ENCODE measurements at regions of chr16 and their contacts with region 1.

Region 1: DNA sequence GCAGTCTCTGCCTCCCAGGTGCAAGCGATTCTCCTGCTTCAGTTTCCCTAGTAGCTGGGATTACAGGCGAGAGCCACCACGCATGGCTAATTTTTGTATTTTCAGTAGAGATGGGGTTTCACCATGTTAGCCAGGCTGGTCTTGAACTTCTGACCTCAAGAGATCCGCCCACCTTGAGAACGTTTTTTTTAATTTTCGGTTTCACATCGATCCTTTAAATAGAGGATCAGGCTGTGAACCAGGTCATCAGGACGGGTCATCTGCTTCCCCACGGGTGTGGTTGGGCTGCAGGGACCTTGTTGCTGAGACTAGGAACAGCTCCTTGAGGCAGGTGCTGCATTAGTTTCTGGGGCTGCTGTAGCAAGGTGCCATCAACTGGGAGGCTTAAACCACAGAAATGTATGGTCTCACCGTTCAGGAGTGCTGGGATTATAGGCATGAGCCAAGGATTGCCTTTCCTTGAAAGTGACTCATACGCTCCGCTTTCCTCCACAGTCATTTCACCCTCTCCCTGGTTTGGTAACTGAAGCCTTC is 7.9 kb upstream of the NAGPA start:
- DNase-seq: no peak
- ATAC-seq: no peak; the same call in 2 of the 3 replicates
- H3K4me3 ChIP-seq: peak overlapping the region in 1 of 3 experiments; percentile 8; a peak in 1 of 6 replicates
- H3K27ac ChIP-seq: no peak overlapping the region
- H3K4me1 ChIP-seq: peaks cover 66% of the 10 kb centered on the region
- H3K27me3 ChIP-seq: peaks cover 0 to 8% of the 10 kb centered on the region in 2 experiments; a peak in 2 of 5 replicates
- CTCF ChIP-seq: no peak
- EP300 ChIP-seq: no peak
- POLR2A ChIP-seq: no peak
- RAD21 ChIP-seq: no peak

Region 2: GRCh38 chr16:4892361-4893102 is 149.1 kb before region 1 on chr16:
- CTCF ChIA-PET with region 1: no interaction called
- POLR2A ChIA-PET with region 1: no interaction called
- in situ Hi-C with region 1: no loop called
- intact Hi-C with region 1: no loop called
- DNase-seq: no peak
- ATAC-seq: no peak
- H3K4me3 ChIP-seq: no peak overlapping the region
- H3K27ac ChIP-seq: no peak overlapping the region
- H3K4me1 ChIP-seq: no peaks in the 10 kb centered on the region
- H3K27me3 ChIP-seq: no peaks in the 10 kb centered on the region
- CTCF ChIP-seq: no peak
- EP300 ChIP-seq: no peak
- POLR2A ChIP-seq: no peak
- RAD21 ChIP-seq: no peak

Region 3: DNA sequence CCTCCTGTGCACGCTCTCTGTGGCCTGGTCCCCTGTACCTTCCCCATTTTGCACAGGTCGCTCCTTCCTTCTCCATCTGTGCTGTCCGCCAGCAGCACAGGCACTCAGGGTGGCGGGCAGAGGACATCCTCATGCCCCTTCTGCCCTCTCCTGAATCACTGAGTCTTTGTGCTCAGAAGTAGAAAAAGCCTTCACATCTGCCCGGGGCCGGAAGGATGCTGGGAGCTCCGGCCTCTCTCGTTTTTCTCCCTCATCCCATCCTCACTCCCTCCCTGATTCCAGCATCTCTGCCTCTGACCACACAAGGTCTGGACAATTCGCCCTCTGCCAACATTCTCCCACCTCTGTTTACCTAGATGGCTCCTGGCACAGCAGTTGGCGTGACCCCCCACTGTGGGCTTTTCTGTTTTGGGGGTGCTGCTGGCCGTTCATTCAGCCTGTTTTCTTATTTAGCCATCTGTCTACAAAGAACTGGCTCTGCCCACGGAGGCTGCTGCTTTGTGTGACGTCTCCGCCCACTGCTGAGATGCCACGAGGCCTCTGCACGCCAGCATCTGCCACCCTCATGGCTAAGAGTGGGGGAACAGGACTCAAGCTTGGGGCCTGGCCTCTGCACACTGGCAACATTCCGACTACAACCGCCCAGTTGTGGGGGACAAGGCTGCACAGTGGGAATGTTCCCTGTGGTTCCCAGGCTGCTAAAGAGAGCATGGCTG is 46.8 kb before region 1 on chr16:
- CTCF ChIA-PET with region 1: no interaction called
- POLR2A ChIA-PET with region 1: no interaction called
- in situ Hi-C with region 1: no loop called
- intact Hi-C with region 1: no loop called
- DNase-seq: no peak
- ATAC-seq: peak; percentile 45; the same call in 2 of the 3 replicates
- H3K4me3 ChIP-seq: no peak overlapping the region
- H3K27ac ChIP-seq: no peak overlapping the region
- H3K4me1 ChIP-seq: no peaks in the 10 kb centered on the region; the same call in 1 of the 2 replicates
- H3K27me3 ChIP-seq: peaks cover 3 to 31% of the 10 kb centered on the region in 2 experiments; a peak in 4 of 5 replicates
- CTCF ChIP-seq: no peak
- EP300 ChIP-seq: no peak
- POLR2A ChIP-seq: no peak
- RAD21 ChIP-seq: no peak

Region 4: DNA sequence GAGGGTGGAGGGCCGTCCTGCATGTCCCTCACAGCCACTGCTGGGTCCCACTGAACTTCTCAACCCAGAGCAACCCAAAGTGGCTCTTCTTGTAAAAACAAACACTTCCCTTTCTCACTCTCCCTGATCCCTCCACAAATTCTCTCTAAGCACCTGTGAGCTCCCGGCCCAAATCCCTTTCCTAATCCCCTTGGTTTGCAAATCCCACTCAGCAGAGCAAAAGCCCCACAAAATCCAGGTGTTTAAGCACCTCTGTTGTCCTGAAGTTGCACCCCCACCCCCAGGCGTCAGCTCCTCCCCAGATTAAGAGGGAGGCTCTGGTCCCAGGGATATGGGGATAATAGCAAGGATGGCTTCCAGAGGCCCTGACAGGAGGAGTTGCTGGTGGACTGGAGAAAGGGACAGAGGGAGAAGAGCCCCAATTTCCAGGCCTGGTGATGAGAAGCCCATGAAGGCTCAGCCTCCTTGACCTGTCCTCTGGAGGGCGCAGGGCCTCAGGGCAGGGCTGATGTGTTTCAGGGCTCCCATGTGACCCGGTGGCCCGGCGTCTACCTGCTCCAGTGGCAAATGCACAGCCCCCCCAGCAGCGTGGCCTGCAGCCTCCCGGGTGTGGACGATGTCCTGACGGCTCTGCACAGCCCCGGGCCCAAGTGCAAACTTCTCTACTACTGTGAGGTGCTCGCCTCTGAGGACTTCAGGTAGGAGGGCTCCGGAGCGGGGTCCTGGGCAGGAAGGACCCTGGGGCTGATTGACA is 30.9 kb before region 1 on chr16:
- CTCF ChIA-PET with region 1: interaction called, 5 read pairs
- POLR2A ChIA-PET with region 1: no interaction called
- in situ Hi-C with region 1: no loop called
- intact Hi-C with region 1: loop called (anchors 1 kb)
- DNase-seq: peak; percentile 44
- ATAC-seq: peak; percentile 80
- H3K4me3 ChIP-seq: peak overlapping the region in 1 of 3 experiments; percentile 50; a peak in 1 of 6 replicates
- H3K27ac ChIP-seq: no peak overlapping the region
- H3K4me1 ChIP-seq: peaks cover 36% of the 10 kb centered on the region
- H3K27me3 ChIP-seq: peaks cover 5 to 56% of the 10 kb centered on the region in 2 experiments; a peak in 4 of 5 replicates
- CTCF ChIP-seq: peak; percentile 85
- EP300 ChIP-seq: no peak
- POLR2A ChIP-seq: no peak
- RAD21 ChIP-seq: peak; percentile 59

Measured in HepG2 (cell line).